Cardiac septum (tissue), 1 donor: ENCODE measurements at regions of chr12 and their contacts with region 1.

Region 1: DNA sequence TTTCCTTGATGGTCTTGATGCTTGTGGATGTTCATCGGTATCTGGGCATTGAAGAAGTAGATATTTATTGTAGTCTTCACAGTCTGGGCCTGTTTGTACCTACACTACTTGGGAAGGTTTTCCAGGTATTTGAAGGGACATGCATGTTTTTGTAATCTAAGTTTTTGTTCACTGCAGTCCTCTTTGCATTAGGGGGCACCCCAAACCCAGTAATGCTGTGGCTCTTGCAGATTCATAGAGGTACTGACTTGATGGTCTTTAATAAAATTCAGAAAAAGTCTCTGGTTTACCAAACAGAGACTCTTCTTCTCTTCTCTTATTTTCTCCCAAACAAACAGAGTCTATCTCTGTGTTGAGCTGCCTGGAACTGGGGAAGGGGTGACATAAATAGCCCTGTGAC is 150.9 kb upstream of the SLC16A7 start:
- DNase-seq: no peak

Region 2: DNA sequence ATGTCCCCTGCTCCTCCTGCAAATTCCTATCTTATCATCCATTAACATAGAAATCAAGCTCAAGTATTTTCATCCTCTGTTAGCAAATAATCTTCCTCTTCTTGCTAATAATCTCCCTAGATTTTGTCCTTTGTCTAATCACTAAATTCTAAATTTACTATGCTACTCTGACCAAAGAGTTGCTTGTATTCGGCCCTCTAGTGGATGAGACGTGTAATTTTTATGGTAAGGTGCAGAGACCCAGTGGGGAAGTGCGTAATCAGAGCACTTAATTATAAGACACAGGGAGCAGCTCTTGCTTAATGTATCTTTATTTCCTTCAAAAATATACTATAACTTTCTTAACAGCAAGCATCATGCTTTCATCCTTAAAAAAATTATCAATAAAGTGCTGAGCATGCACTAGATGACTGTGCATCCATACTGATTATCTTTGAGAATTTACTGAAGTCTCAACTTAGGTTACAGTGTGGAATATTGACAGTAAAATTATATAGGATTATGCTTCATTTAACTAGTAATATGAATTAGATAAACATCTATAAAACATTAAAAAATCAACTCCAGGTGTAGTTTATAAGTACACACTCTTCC is 363.5 kb after region 1 on chr12:
- intact Hi-C with region 1: loop called (anchors 10 kb)
- DNase-seq: no peak

Region 3: DNA sequence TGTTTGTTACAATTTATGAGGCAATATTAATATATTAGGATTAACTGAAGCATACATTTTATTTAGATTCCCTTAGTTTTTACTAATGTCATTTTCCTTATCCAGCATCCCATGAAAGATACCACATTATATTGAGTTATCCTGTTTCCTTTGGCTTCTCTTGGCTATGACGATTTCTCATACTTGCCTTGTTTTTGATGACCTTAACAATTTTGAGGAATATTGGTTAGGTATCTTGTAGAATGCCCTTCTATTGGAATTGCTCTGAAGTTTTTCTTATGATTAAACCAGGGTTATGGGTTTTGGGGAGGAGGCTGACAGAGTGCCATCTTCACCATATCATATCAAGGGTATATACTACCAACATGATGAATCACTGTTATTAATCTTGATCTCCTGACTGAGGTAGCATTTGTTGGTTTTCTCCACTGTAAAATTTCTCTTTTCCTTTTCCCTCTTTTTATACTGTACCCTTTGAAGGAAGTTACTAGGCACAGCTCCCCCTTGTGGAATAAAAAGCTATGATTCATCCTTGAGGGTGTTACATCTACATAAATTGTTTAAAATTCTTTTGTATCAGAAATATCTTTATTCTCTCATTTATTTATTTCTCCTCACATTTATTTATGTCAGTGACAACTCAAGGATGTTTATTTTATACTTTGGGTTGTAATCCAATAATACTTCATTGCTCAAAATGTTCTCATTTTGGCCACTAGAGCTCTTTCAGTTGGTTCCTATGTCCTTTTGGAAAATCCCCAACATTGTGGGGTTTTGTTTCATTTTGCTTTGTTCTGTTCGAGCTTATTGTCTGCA is 389.9 kb after region 1 on chr12:
- intact Hi-C with region 1: loop called (anchors 10 kb)
- DNase-seq: no peak